ENCODE measurements at regions of chr1 and their contacts with region 1.

Region 1: GRCh38 chr1:13960375-13960987 is 260.5 kb downstream of the PRDM2 start:
- ATAC-seq: peak; percentile 50 to 76 (median 64)
- H3K4me3 ChIP-seq: no peak overlapping the region
- H3K27ac ChIP-seq: no peak overlapping the region
- H3K4me1 ChIP-seq: no peaks in the 10 kb centered on the region

Region 2: DNA sequence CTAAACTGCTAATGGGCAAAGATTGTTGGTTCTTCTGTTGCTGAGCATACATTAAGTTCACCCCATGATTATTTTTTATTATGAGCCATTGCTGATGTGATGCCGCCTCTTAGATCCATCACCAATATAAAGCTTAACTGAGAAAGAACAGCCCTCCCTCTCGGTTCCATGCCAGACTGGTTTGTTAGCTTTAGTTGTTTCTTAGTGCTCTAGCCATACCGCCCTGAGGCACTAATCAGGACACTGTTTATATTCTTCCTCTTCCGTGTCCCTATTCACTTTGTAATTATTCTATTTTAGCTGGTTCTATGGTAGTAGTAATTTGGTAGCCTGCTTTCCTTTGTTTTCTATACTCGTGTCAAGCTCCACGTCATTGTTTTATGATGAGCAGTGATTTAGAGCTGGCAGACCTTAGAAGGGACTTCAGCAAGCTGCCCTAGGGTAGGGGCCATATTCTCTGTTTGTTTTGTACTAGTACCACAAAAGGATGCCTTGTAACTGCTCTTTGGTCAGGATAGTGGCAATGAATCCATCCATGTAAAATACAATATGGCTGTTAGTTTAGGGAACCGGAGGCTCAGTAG is 404.2 kb before region 1 on chr1:
- in situ Hi-C with region 1: no loop called
- ATAC-seq: no peak
- H3K4me3 ChIP-seq: no peak overlapping the region
- H3K27ac ChIP-seq: no peak overlapping the region
- H3K4me1 ChIP-seq: no peaks in the 10 kb centered on the region

Region 3: DNA sequence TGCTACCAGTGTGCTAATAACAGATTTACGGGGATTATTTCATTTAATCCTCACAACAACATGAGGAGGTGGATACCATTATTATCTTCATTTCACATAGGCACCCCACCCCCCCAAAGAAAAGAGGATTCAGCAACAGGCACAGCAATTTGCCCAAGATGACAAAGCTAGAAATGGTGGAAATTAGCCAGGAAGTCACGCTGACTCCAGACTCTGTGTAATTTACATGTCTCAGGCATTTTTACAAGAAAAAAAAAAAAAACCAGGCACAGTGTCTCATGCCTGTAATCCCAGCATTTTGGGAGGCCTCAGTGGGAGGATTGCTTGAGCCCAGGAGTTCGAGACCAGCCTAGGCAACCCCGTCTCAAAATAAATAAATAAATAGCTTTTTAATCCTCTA is 298.0 kb before region 1 on chr1:
- in situ Hi-C with region 1: loop called in 8 of 9 experiments (anchors 10 to 25 kb)
- ATAC-seq: peak in 4 of 8 experiments; percentile 40 to 85 (median 76)
- H3K4me3 ChIP-seq: no peak overlapping the region
- H3K27ac ChIP-seq: no peak overlapping the region
- H3K4me1 ChIP-seq: no peaks in the 10 kb centered on the region

Region 4: GRCh38 chr1:13828454-13829151 is 131.9 kb before region 1 on chr1:
- in situ Hi-C with region 1: loop called in 2 of 9 experiments (anchors 5 to 10 kb)
- ATAC-seq: peak in 5 of 8 experiments; percentile 13 to 77 (median 48)
- H3K4me3 ChIP-seq: no peak overlapping the region
- H3K27ac ChIP-seq: no peak overlapping the region
- H3K4me1 ChIP-seq: peaks cover 0 to 3% of the 10 kb centered on the region in 2 donors

Region 5: GRCh38 chr1:14140831-14141401 is 180.4 kb after region 1 on chr1:
- in situ Hi-C with region 1: no loop called
- ATAC-seq: peak in 1 of 8 experiments; percentile 24
- H3K4me3 ChIP-seq: no peak overlapping the region
- H3K27ac ChIP-seq: no peak overlapping the region
- H3K4me1 ChIP-seq: peaks cover 5 to 6% of the 10 kb centered on the region in 2 donors

Region 6: DNA sequence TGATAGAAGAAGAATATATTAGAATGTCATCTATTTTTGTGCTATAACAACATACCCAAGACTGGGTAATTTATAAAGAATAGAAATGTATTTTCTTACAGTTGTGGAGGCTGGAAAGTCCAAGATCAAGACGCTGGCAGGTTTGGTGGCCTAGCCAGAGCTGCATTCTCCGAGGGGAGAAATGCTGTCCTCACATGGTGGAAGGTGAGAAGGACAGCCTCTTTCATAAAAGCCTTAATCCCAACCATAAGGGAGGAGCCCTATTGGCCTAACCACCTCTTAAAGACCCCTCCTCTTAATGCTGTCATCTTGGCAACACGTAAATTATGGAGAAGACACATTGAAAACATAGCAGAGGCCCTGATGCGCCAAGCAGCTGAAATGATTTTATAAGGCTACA is 577.9 kb after region 1 on chr1:
- in situ Hi-C with region 1: loop called in 1 of 9 experiments (anchors 25 kb)
- ATAC-seq: peak in 1 of 8 experiments; percentile 40
- H3K4me3 ChIP-seq: no peak overlapping the region
- H3K27ac ChIP-seq: no peak overlapping the region
- H3K4me1 ChIP-seq: peaks cover 30 to 36% of the 10 kb centered on the region in 2 donors

Region 7: GRCh38 chr1:15046487-15047165 is 1086.1 kb after region 1 on chr1:
- in situ Hi-C with region 1: loop called in 1 of 9 experiments (anchors 25 kb)
- ATAC-seq: peak; percentile 83 to 92 (median 88)
- H3K4me3 ChIP-seq: no peak overlapping the region
- H3K27ac ChIP-seq: no peak overlapping the region
- H3K4me1 ChIP-seq: peaks cover 0 to 14% of the 10 kb centered on the region in 2 donors

Region 8: GRCh38 chr1:15100121-15100874 is 1139.8 kb after region 1 on chr1:
- in situ Hi-C with region 1: loop called in 2 of 9 experiments (anchors 25 kb)
- ATAC-seq: peak; percentile 69 to 88 (median 79)
- H3K4me3 ChIP-seq: no peak overlapping the region
- H3K27ac ChIP-seq: no peak overlapping the region
- H3K4me1 ChIP-seq: peaks cover 24% of the 10 kb centered on the region in 2 donors